ENCODE measurements at regions of chr19 and their contacts with region 1.

Region 1: DNA sequence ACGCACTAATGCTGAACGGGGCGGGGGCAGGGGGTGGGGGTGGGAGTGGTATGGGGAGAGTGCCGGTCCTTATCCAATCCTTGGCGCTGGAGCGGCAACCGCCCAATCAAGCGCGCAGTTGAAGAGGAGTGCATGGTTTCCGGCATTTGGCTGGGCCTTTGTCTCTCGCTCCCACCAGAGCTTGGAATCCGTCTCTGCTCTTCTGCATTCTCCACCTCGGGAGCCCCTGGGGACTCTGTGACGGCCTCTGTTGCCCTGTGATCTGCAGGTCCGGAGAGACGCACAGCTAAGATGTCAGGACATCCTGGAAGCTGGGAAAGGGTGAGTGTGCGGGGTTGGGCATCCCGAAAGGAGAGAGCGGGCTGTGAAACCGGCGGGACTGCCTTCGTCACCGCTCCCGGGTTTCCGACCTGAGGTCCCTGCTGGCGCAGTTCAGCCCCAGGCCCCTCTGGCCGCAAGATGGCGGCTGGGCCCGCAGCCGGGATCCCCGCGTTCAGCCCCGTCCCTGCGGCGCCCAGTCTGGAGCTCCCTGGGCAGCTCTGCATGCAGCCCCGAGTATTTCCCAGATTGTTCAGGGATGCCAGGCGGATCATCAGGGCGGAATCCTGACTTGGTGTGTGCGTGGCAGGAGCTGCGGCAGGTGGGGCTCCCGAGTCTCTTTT is 53.6 kb upstream of the ZNF254 start:
- DNase-seq: peak; percentile 93
- H3K4me3 ChIP-seq: peak overlapping the region; percentile 74 to 93 (median 83)
- H3K27ac ChIP-seq: peak overlapping the region; percentile 82 to 96 (median 92)
- H3K4me1 ChIP-seq: peaks cover 20 to 54% (median 46%) of the 10 kb centered on the region in 6 donors
- H3K27me3 ChIP-seq: no peaks in the 10 kb centered on the region
- CTCF ChIP-seq: peak in 3 of 11 experiments; percentile 15 to 31 (median 24)
- POLR2A ChIP-seq: peak in 1 of 3 donors; percentile 52

Region 2: DNA sequence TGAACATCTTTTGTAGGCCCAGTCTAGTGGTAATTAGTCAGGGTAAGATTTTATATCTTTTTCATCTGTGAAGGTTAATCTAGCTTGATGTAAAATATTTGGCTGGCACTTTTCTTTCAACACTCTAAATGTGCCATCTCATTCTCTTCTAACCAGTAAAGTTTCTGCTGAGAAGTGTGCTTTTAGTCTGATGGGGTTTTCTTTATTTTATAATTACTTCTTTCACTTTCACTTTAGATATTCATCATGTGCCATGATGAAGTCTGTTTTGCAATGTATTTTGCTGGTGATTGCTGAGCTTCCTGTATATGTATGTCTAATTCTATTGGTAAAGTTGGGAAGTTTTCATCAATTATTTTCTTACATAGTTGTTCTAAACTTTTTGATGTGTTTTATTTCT is 86.9 kb before region 1 on chr19:
- intact Hi-C with region 1: no loop called
- DNase-seq: no peak
- H3K4me3 ChIP-seq: no peak overlapping the region
- H3K27ac ChIP-seq: no peak overlapping the region
- H3K4me1 ChIP-seq: no peaks in the 10 kb centered on the region
- H3K27me3 ChIP-seq: no peaks in the 10 kb centered on the region
- CTCF ChIP-seq: no peak
- POLR2A ChIP-seq: no peak

Region 3: GRCh38 chr19:23971598-23971997 is 61.8 kb before region 1 on chr19:
- intact Hi-C with region 1: no loop called
- DNase-seq: no peak
- H3K4me3 ChIP-seq: peak overlapping the region in 2 of 8 donors; percentile 20 to 44
- H3K27ac ChIP-seq: no peak overlapping the region
- H3K4me1 ChIP-seq: no peaks in the 10 kb centered on the region
- H3K27me3 ChIP-seq: peaks cover 3 to 44% (median 17%) of the 10 kb centered on the region in 7 donors
- CTCF ChIP-seq: no peak
- POLR2A ChIP-seq: no peak

Region 4: GRCh38 chr19:24086974-24087595 is 53.7 kb after region 1 on chr19 and contains the start of gene ZNF254:
- intact Hi-C with region 1: loop called (anchors 10 kb)
- DNase-seq: peak; percentile 95
- H3K4me3 ChIP-seq: peak within 1 kb of the TSS; percentile 49 to 82 (median 63)
- H3K27ac ChIP-seq: peak within 1 kb of the TSS; percentile 87 to 93 (median 91)
- H3K4me1 ChIP-seq: peaks cover 0 to 31% (median 19%) of the 10 kb centered on the region in 6 donors
- H3K27me3 ChIP-seq: no peaks in the 10 kb centered on the region
- CTCF ChIP-seq: no peak
- POLR2A ChIP-seq: peak in 2 of 3 donors; percentile 42 to 68
- total RNA-seq, gene ZNF254: 21.0 to 35.6 (median 25.7) TPM

Measured in spleen (tissue), 13 donors.